ENCODE measurements at regions of chr20 and their contacts with region 1.

Region 1: DNA sequence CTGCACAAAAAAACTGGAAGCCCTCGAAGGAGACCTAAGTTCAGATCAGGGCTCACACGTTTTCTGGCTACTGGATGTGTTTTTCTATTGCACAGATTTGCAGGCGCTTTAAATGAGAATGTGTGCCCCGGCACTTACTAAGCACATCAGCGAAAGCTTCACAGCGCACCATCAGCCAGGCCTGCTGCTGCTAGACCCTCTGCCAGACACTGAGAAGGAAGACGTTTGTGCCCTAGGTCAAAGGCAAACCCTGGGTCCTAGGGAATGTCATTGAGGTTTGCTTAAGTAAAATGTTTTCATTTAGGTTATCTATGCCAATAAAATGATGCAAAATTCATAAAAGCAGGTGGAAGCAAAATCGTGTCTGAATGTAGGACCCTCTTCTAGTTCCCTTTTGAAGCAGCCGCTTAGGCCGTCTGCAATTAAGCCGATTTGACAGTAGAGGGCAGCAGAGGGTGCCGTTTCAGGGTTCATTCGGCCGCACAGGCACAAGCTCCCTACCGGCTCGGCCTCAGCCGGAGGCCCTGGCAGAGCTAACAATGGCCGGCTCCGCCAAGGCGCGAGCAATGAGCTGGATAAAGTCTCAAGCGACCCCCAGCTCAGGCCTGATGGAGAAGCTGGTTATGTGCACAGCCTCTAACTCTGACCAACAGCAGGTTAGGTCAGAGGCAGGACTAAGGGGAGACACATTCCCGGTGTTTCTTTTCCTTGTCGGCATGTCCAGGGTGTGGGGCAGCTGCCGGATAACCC is 107.2 kb upstream of the FOXA2 start:
- DNase-seq: peak; percentile 87 to 89
- ATAC-seq: peak; percentile 93
- H3K4me3 ChIP-seq: no peak overlapping the region
- H3K27ac ChIP-seq: no peak overlapping the region
- H3K4me1 ChIP-seq: peaks cover 0 to 2% of the 10 kb centered on the region in 2 donors
- H3K27me3 ChIP-seq: no peaks in the 10 kb centered on the region

Region 2: GRCh38 chr20:22633360-22633759 is 58.2 kb before region 1 on chr20:
- intact Hi-C with region 1: no loop called
- DNase-seq: no peak
- ATAC-seq: no peak
- H3K4me3 ChIP-seq: no peak overlapping the region
- H3K27ac ChIP-seq: no peak overlapping the region
- H3K4me1 ChIP-seq: no peaks in the 10 kb centered on the region
- H3K27me3 ChIP-seq: peaks cover 0 to 2% of the 10 kb centered on the region in 2 donors

Region 3: GRCh38 chr20:22675341-22675740 is 16.2 kb before region 1 on chr20:
- intact Hi-C with region 1: no loop called
- DNase-seq: no peak
- ATAC-seq: no peak
- H3K4me3 ChIP-seq: no peak overlapping the region
- H3K27ac ChIP-seq: no peak overlapping the region
- H3K4me1 ChIP-seq: no peaks in the 10 kb centered on the region
- H3K27me3 ChIP-seq: peaks cover 0 to 6% of the 10 kb centered on the region in 2 donors

Region 4: GRCh38 chr20:22805219-22805618 is 113.7 kb after region 1 on chr20:
- intact Hi-C with region 1: loop called in 1 of 2 experiments (anchors 10 kb)
- DNase-seq: peak in 1 of 2 donors; percentile 77
- ATAC-seq: peak; percentile 65
- H3K4me3 ChIP-seq: no peak overlapping the region
- H3K27ac ChIP-seq: no peak overlapping the region
- H3K4me1 ChIP-seq: no peaks in the 10 kb centered on the region
- H3K27me3 ChIP-seq: no peaks in the 10 kb centered on the region

Region 5: GRCh38 chr20:23235173-23236027 is 543.9 kb after region 1 on chr20:
- intact Hi-C with region 1: loop called in 1 of 2 experiments (anchors 5 kb)
- DNase-seq: peak; percentile 84 to 89
- ATAC-seq: peak; percentile 94
- H3K4me3 ChIP-seq: no peak overlapping the region
- H3K27ac ChIP-seq: no peak overlapping the region
- H3K4me1 ChIP-seq: no peaks in the 10 kb centered on the region
- H3K27me3 ChIP-seq: no peaks in the 10 kb centered on the region

Region 6: DNA sequence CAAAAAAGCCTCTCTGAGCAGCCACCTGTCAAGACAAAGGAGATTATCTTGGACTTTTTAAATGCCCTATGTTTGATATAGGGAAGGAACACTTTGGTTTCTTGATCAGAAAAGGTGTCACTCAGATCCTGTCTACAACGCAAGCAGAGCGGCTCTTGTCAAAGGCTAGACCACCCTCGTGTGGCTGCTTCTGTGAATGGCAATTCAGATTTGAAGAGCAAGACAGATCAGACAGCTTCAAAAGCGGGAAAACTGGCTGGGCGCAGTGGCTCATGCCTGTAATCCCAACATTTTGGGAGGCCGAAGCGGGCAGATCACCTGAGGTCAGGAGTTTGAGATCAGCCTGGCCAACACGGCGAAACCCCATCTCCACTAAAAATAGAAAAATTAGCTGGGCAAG is 649.0 kb after region 1 on chr20:
- intact Hi-C with region 1: loop called in 1 of 2 experiments (anchors 2 kb)
- DNase-seq: peak; percentile 76 to 83
- ATAC-seq: peak; percentile 75
- H3K4me3 ChIP-seq: no peak overlapping the region
- H3K27ac ChIP-seq: no peak overlapping the region
- H3K4me1 ChIP-seq: no peaks in the 10 kb centered on the region
- H3K27me3 ChIP-seq: no peaks in the 10 kb centered on the region